Activated B cell treated with CpG ODN at 0.5 μM for 24 hours (primary cell): ENCODE measurements at regions of chr17 and their contacts with region 1.

Region 1: GRCh38 chr17:34542700-34543336 is 36.6 kb upstream of the TMEM132E start:
- DNase-seq: no peak
- ATAC-seq: no peak
- H3K4me3 Mint-ChIP-seq: no peak overlapping the region
- H3K27ac Mint-ChIP-seq: no peak overlapping the region
- H3K4me1 Mint-ChIP-seq: no peaks in the 10 kb centered on the region
- H3K27me3 Mint-ChIP-seq: peaks cover 32% of the 10 kb centered on the region
- CTCF ChIP-seq: peak; percentile 86

Region 2: DNA sequence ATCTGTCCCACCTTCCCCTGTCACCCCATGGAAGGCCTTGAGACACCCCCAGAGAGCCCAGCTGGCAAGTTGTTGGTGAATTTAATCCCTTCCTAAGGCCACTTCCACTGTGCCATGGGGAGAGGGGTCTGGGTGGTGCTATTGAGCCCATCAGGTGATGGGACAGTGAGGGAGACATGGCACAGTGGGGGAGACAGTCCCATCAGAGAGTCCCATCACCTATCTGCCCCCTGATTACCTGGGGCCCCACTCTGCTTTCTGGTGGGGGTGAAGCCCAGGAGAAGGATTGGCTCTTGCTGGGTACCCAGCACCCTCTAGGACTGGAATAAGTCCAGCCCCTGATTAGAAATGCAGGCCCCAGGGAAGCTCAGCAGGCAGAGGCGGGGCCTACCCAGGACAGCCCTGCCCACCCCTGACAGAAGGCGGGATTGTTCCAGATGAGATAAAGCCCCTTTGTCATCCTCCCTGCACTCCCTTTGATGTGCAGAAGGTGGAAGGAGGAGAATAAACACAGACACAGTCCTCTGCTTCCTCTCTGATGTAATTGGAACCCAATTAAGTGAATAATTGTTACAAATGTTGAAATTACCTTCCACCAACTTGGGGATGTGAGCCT is 55.5 kb after region 1 on chr17:
- CTCF ChIA-PET with region 1: no interaction called
- POLR2A ChIA-PET with region 1: no interaction called
- intact Hi-C with region 1: no loop called
- DNase-seq: no peak
- ATAC-seq: no peak
- H3K4me3 Mint-ChIP-seq: no peak overlapping the region
- H3K27ac Mint-ChIP-seq: no peak overlapping the region
- H3K4me1 Mint-ChIP-seq: no peaks in the 10 kb centered on the region
- H3K27me3 Mint-ChIP-seq: peaks cover 18% of the 10 kb centered on the region
- CTCF ChIP-seq: no peak

Region 3: GRCh38 chr17:34637548-34638525 is 95.0 kb after region 1 on chr17:
- CTCF ChIA-PET with region 1: interaction called, 7 read pairs
- POLR2A ChIA-PET with region 1: no interaction called
- intact Hi-C with region 1: loop called (anchors 1 kb)
- DNase-seq: peak; percentile 53
- ATAC-seq: peak; percentile 95
- H3K4me3 Mint-ChIP-seq: peak overlapping the region; percentile 77
- H3K27ac Mint-ChIP-seq: no peak overlapping the region
- H3K4me1 Mint-ChIP-seq: peaks cover 5% of the 10 kb centered on the region
- H3K27me3 Mint-ChIP-seq: peaks cover 39% of the 10 kb centered on the region
- CTCF ChIP-seq: peak; percentile 38

Region 4: DNA sequence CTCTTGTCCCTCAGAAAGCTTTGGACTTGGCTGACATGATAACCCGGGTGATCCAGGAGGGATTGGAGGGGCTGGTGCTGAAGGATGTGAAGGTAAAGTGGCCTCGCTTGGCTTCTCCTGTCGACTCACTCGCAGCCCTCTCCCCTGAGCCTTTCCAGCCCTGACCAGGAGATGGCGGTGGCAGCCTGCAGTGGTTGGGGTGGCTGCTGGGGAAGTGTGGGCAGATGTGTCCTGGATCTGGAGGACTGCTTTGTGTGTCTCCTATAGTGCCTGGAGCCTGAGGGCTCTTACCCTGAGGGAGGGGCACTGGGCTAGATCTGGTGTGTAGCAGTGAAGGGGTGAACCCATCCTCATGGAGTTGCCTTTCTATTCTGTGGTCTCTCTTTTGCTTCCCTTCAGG is 455.4 kb after region 1 on chr17:
- CTCF ChIA-PET with region 1: no interaction called
- POLR2A ChIA-PET with region 1: no interaction called
- intact Hi-C with region 1: loop called (anchors 5 kb)
- DNase-seq: peak; percentile 65
- ATAC-seq: peak; percentile 100
- H3K4me3 Mint-ChIP-seq: no peak overlapping the region
- H3K27ac Mint-ChIP-seq: peak overlapping the region; percentile 66
- H3K4me1 Mint-ChIP-seq: peaks cover 4% of the 10 kb centered on the region
- H3K27me3 Mint-ChIP-seq: no peaks in the 10 kb centered on the region
- CTCF ChIP-seq: no peak

Region 5: GRCh38 chr17:35082073-35082657 is 539.3 kb after region 1 on chr17:
- CTCF ChIA-PET with region 1: no interaction called
- POLR2A ChIA-PET with region 1: no interaction called
- intact Hi-C with region 1: no loop called
- DNase-seq: no peak
- ATAC-seq: no peak
- H3K4me3 Mint-ChIP-seq: peak overlapping the region; percentile 11
- H3K27ac Mint-ChIP-seq: no peak overlapping the region
- H3K4me1 Mint-ChIP-seq: peaks cover 45% of the 10 kb centered on the region
- H3K27me3 Mint-ChIP-seq: no peaks in the 10 kb centered on the region
- CTCF ChIP-seq: no peak

Region 6: GRCh38 chr17:35141681-35142466 is 599.1 kb after region 1 on chr17 and contains the start of gene NLE1:
- CTCF ChIA-PET with region 1: no interaction called
- POLR2A ChIA-PET with region 1: no interaction called
- intact Hi-C with region 1: loop called (anchors 1 kb)
- DNase-seq: peak; percentile 87
- ATAC-seq: peak; percentile 99
- H3K4me3 Mint-ChIP-seq: peak within 1 kb of the TSS; percentile 87
- H3K27ac Mint-ChIP-seq: peak within 1 kb of the TSS; percentile 59
- H3K4me1 Mint-ChIP-seq: peaks cover 14% of the 10 kb centered on the region
- H3K27me3 Mint-ChIP-seq: peaks cover 1% of the 10 kb centered on the region
- CTCF ChIP-seq: no peak
- total RNA-seq, gene NLE1: 22.1 and 26.3 TPM in 2 replicates

Region 7: GRCh38 chr17:35747540-35748017 is 1204.8 kb after region 1 on chr17:
- CTCF ChIA-PET with region 1: no interaction called
- POLR2A ChIA-PET with region 1: no interaction called
- intact Hi-C with region 1: loop called (anchors 10 kb)
- DNase-seq: peak; percentile 64
- ATAC-seq: peak; percentile 97
- H3K4me3 Mint-ChIP-seq: no peak overlapping the region
- H3K27ac Mint-ChIP-seq: no peak overlapping the region
- H3K4me1 Mint-ChIP-seq: peaks cover 6% of the 10 kb centered on the region
- H3K27me3 Mint-ChIP-seq: peaks cover 35% of the 10 kb centered on the region
- CTCF ChIP-seq: no peak